ENCODE measurements at regions of chr17 and their contacts with region 1.

Region 1: GRCh38 chr17:75109407-75110233 is at the start of gene ARMC7:
- DNase-seq: peak; percentile 86
- H3K4me3 Mint-ChIP-seq: peak within 1 kb of the TSS; percentile 78
- H3K27ac Mint-ChIP-seq: peak within 1 kb of the TSS; percentile 39
- H3K4me1 Mint-ChIP-seq: peaks cover 12% of the 10 kb centered on the region
- H3K27me3 Mint-ChIP-seq: no peaks in the 10 kb centered on the region
- CTCF ChIP-seq: no peak
- total RNA-seq, gene ARMC7: 9.3 and 13.3 TPM in 2 replicates

Region 2: GRCh38 chr17:74951680-74952421 is 157.8 kb before region 1 on chr17:
- CTCF ChIA-PET with region 1: no interaction called
- POLR2A ChIA-PET with region 1: no interaction called
- intact Hi-C with region 1: no loop called
- DNase-seq: no peak
- H3K4me3 Mint-ChIP-seq: no peak overlapping the region
- H3K27ac Mint-ChIP-seq: no peak overlapping the region
- H3K4me1 Mint-ChIP-seq: no peaks in the 10 kb centered on the region
- H3K27me3 Mint-ChIP-seq: no peaks in the 10 kb centered on the region
- CTCF ChIP-seq: no peak

Region 3: DNA sequence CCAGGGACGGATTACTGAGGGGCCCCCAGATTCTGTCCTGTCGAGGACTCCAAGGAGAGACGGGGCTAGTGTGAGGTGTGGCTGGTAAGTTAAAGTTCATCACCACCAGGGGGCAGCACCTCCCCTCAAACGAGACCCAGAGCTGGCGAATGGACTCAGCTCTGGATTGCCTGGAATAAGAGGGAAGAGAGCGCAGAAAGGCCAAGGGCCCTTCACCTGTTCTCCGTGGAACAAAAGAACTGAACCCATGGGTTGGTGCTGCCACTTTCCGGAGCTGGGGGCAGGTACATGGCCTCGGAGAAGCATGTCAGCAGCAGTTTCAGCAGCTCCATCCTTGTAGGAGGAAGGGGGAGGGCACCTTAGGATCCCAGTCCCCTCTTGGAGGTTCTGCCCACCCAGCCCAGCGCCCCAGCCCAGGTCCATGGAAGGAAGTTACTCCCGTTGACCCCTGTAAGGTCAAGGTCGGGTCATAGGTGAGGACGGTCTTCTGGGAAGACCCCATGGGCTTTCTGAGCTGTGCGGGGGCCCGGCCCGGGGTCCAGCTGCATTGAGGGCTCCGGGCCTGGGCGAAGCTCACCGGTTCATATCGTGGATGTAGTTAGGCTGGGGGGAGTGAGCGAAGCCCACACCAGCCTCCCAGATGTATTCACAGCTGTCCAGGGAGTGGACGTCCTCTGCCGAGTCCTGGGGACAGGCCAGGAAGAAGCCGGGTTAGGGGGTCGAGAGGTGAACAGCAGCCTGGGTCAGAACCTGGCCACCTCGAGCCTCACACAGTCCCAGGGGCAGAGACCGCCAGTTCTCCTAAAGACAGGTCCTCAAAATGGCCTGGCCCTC is 147.7 kb before region 1 on chr17:
- CTCF ChIA-PET with region 1: interaction called, 12 read pairs
- POLR2A ChIA-PET with region 1: no interaction called
- intact Hi-C with region 1: loop called (anchors 2 kb)
- DNase-seq: peak; percentile 89
- H3K4me3 Mint-ChIP-seq: no peak overlapping the region
- H3K27ac Mint-ChIP-seq: no peak overlapping the region
- H3K4me1 Mint-ChIP-seq: peaks cover 21% of the 10 kb centered on the region
- H3K27me3 Mint-ChIP-seq: no peaks in the 10 kb centered on the region
- CTCF ChIP-seq: peak; percentile 67

Region 4: DNA sequence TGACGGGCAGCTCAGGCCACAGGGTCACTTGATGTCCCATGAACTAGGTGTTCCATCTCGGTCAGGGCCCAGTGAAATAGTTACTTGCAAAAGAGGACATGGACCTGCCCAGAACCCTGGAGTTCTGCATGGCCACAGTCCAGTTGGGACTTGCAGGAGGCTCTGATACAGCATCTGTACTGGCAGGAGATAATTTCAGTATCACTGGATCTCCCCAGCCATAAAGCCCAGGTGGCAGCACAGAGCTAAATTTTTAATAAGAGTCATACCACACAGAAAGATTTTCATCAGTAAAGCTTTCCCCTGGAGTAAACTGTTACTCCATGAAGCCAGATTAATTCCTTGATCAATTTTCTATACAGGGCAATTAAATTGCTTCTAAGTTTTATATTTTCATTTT is 39.8 kb before region 1 on chr17:
- CTCF ChIA-PET with region 1: interaction called, 48 read pairs
- POLR2A ChIA-PET with region 1: interaction called, 7 read pairs
- intact Hi-C with region 1: loop called (anchors 1 kb)
- DNase-seq: peak; percentile 61
- H3K4me3 Mint-ChIP-seq: no peak overlapping the region
- H3K27ac Mint-ChIP-seq: no peak overlapping the region
- H3K4me1 Mint-ChIP-seq: peaks cover 5% of the 10 kb centered on the region
- H3K27me3 Mint-ChIP-seq: no peaks in the 10 kb centered on the region
- CTCF ChIP-seq: peak; percentile 47

Region 5: DNA sequence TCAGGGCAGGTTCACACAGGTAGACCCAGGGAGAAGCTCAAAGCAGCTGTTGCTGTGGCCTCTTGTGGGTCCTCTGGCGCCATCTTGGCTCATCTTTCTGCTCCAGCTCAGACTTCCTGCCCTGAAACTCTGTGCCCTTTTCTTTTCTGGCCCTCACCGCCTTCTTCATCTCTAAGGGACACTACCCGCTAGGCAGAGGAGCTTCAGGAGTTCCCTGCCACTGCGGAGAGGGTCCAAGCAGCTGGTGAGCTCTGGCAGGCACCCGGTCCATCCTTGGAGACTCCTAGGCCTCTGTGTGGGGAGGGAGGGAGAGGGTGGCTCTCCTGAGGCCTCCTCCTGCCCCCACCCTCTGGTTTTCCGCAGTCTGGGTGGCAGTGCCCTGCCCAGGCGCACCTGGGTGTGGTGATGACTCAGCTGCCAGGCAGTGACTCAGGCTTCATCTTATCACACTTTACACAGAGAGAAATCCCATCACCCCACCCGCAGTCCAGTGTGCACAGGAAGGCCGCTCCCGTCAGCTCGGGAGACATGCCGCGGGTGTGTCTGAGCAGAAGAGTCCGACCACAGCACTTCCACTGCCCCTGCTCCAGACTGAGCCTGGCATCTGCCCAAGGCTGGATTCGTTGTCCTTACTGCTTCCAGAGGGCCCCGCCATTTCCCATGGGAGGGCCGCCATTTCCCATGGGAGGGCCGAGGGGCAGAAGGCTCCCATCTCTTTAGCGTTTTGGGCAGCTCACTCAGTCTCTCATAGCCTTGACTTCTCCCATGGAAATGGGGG is 14.6 kb after region 1 on chr17:
- CTCF ChIA-PET with region 1: interaction called, 100 read pairs
- POLR2A ChIA-PET with region 1: interaction called, 37 read pairs
- intact Hi-C with region 1: no loop called
- DNase-seq: peak; percentile 98
- H3K4me3 Mint-ChIP-seq: peak overlapping the region; percentile 66
- H3K27ac Mint-ChIP-seq: peak overlapping the region; percentile 95
- H3K4me1 Mint-ChIP-seq: peaks cover 18% of the 10 kb centered on the region
- H3K27me3 Mint-ChIP-seq: no peaks in the 10 kb centered on the region
- CTCF ChIP-seq: no peak

Region 6: GRCh38 chr17:75173526-75173925 is 63.9 kb after region 1 on chr17:
- CTCF ChIA-PET with region 1: interaction called, 136 read pairs
- POLR2A ChIA-PET with region 1: interaction called, 14 read pairs
- intact Hi-C with region 1: loop called (anchors 1 kb)
- DNase-seq: no peak
- H3K4me3 Mint-ChIP-seq: no peak overlapping the region
- H3K27ac Mint-ChIP-seq: peak overlapping the region; percentile 75
- H3K4me1 Mint-ChIP-seq: no peaks in the 10 kb centered on the region
- H3K27me3 Mint-ChIP-seq: no peaks in the 10 kb centered on the region
- CTCF ChIP-seq: no peak

Region 7: DNA sequence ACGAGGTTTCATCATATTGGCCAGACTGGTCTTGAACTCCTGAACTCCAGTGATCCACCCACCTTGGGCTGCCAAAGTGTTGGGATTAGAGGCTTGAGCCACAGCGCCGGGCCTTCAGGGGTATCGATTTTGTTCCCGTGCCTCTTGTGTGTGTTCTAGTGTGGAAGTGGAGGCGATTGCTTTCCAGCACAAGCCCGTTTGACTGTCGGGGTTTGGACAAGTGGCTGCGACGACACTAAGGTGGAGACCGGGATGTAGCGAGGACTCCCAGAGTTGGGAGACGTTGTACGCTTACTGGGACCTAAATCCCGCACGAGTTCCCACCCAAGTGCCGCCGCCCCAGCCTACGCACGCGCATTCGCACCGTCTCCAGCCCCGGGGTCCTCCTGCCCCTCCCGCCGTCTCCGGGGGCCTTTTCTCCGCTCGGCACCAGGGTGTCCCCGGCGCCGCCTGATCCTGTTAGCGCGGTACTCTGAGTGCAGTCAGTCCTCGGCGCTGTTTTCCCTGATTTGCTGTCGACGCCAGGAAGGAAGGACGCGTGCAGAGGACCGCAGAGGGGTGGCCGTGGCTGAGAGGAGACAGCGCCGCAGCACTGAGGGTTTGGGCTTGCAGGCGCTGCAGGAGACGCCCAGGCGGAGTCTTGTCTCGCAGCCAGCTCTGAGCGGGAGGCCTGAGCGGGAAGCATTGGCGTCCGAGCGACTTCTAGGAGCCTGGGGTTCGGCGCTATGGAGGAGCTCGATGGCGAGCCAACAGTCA is 95.6 kb after region 1 on chr17 and contains the start of gene NUP85:
- CTCF ChIA-PET with region 1: interaction called, 93 read pairs
- POLR2A ChIA-PET with region 1: interaction called, 23 read pairs
- intact Hi-C with region 1: loop called (anchors 1 kb)
- DNase-seq: peak; percentile 94
- H3K4me3 Mint-ChIP-seq: peak within 1 kb of the TSS; percentile 78
- H3K27ac Mint-ChIP-seq: peak within 1 kb of the TSS; percentile 98
- H3K4me1 Mint-ChIP-seq: peaks cover 11% of the 10 kb centered on the region
- H3K27me3 Mint-ChIP-seq: no peaks in the 10 kb centered on the region
- CTCF ChIP-seq: no peak
- total RNA-seq, gene NUP85: 42.3 and 49.2 TPM in 2 replicates

Measured in MCF 10A (cell line).